Caco-2 (cell line): ENCODE measurements at regions of chrX and their contacts with region 1.

Region 1: DNA sequence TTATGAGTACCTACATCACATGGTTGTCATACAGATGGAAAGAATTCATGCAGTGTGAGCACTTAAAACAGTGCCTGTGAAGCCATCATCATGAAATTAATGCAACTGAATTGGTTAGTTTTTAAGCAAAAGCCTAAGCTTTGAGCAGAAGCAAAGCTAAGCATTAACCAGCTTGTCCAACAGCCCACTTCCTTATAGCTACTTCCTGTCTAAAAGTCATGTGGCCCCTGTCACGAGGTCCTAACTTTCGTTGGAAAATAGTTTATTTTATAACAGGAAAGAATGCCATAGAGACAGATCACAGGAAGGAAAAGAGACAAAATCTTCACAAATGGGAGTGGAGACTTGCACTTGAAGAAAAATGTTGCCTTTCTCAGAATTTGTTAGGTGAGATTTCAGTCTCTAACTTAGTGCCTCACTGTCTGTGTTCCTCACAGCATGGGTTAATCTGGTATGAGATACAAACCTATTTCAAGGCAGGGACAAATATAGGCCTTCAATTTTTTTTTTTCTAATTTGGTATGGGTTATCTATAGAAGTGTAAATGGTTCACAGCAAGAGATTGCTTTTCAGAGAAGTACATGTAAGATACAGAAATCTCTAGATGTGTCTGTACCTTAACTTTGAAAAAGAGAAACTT is 27.7 kb upstream of the VCX start:
- DNase-seq: no peak
- H3K4me3 ChIP-seq: no peak overlapping the region
- H3K4me3 Mint-ChIP-seq: no peak overlapping the region
- H3K27ac Mint-ChIP-seq: no peak overlapping the region
- H3K4me1 ChIP-seq: no peaks in the 10 kb centered on the region
- H3K4me1 Mint-ChIP-seq: no peaks in the 10 kb centered on the region
- H3K27me3 ChIP-seq: no peaks in the 10 kb centered on the region
- H3K27me3 Mint-ChIP-seq: peaks cover 2% of the 10 kb centered on the region
- CTCF ChIP-seq: no peak

Region 2: DNA sequence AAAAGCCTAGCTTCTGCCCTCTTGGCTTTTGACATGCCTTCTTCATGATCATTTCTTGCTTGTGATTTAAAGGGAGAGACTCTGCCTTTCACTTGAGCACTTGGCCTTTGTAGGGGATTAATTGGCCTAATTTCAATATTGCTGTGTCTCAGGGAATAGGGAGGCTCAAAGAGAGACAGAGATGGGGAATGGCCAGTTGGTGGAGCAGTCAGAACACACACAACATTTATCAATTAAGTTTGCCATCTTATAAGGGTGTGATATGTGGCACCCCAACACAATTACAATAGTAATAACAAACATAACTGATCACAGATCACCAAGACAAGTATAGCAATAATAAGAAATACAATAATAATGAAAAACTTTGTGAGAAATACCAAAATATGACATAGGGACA is 94.8 kb before region 1 on chrX:
- CTCF ChIA-PET with region 1: no interaction called
- POLR2A ChIA-PET with region 1: no interaction called
- intact Hi-C with region 1: loop called (anchors 10 kb)
- DNase-seq: no peak
- H3K4me3 ChIP-seq: no peak overlapping the region
- H3K4me3 Mint-ChIP-seq: no peak overlapping the region
- H3K27ac Mint-ChIP-seq: no peak overlapping the region
- H3K4me1 ChIP-seq: no peaks in the 10 kb centered on the region
- H3K4me1 Mint-ChIP-seq: no peaks in the 10 kb centered on the region
- H3K27me3 ChIP-seq: no peaks in the 10 kb centered on the region
- H3K27me3 Mint-ChIP-seq: no peaks in the 10 kb centered on the region
- CTCF ChIP-seq: no peak

Region 3: DNA sequence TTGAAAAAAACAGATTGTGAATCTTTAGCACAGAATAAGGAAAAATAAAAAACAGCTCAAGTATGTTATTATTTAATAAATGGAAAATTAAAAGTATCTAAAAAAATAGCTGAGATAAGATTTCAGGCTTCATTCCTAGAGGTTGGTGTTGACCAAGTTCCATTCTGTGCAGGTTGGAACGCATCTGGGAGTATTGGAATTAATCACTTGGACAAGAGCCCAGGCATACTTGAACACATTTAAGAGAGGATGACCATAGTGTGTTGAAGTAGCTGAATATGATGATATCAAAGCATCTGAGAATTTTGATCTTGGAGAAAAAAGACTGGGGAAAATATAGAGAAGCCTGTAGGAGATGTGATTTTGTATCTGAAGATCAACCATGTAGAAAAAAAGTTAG is 27.0 kb before region 1 on chrX:
- CTCF ChIA-PET with region 1: no interaction called
- POLR2A ChIA-PET with region 1: no interaction called
- intact Hi-C with region 1: no loop called
- DNase-seq: no peak
- H3K4me3 ChIP-seq: no peak overlapping the region
- H3K4me3 Mint-ChIP-seq: no peak overlapping the region
- H3K27ac Mint-ChIP-seq: no peak overlapping the region
- H3K4me1 ChIP-seq: no peaks in the 10 kb centered on the region
- H3K4me1 Mint-ChIP-seq: no peaks in the 10 kb centered on the region
- H3K27me3 ChIP-seq: no peaks in the 10 kb centered on the region
- H3K27me3 Mint-ChIP-seq: no peaks in the 10 kb centered on the region
- CTCF ChIP-seq: no peak

Region 4: GRCh38 chrX:7925867-7926472 is 110.7 kb after region 1 on chrX:
- CTCF ChIA-PET with region 1: no interaction called
- POLR2A ChIA-PET with region 1: no interaction called
- intact Hi-C with region 1: no loop called
- DNase-seq: peak; percentile 56 to 60
- H3K4me3 ChIP-seq: no peak overlapping the region
- H3K4me3 Mint-ChIP-seq: no peak overlapping the region
- H3K27ac Mint-ChIP-seq: no peak overlapping the region
- H3K4me1 ChIP-seq: peaks cover 3% of the 10 kb centered on the region; the same call in 1 of the 2 replicates
- H3K4me1 Mint-ChIP-seq: no peaks in the 10 kb centered on the region
- H3K27me3 ChIP-seq: no peaks in the 10 kb centered on the region
- H3K27me3 Mint-ChIP-seq: no peaks in the 10 kb centered on the region
- CTCF ChIP-seq: peak; percentile 41 to 57